AG04449 (cell line): ENCODE measurements at regions of chr11 and their contacts with region 1.

Region 1: DNA sequence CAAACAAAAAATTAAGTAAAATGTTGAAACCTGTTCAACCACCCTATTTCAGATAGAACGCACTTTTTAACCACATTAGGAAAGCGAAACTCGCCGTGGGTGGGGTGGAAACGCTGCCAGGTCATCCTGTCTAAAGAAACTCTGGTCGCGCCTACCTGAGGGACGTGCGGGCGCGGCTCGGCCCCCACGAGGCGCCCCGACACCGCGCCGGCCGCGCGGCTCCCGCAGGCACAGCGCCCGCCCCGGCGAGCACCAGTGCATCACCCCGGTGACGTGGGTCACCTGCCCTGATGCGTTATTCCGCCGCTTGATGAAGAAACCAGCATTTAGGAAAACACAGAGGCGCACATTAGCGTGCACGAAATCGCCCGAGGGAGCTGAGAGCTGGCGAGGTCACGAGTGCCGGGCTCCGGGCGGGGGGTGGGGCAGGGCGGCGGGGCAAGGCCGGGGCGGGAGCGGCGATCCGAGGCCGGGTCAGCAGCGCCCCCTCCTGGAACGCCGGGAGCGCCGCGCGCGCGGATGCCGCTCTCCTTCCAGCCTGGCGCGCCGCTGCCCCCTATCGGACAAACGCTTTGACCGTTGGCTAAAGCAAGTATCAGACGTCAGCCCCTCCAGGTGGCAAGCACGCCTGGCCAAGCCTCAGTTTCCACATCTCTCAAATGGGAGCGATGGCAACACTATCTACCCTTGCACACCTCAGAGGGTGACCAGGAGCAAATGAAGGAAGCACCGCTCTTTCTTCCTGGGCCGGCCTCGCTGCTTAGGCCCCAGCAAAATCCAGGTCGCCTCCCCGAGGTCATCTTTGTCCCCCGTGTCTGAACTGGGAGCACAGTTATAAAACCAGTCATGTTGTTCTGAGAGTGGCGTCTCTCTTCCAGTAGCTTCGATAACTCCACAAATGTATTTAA is 15.7 kb upstream of the SNX32 start:
- DNase-seq: peak; percentile 5
- H3K4me3 ChIP-seq: peak overlapping the region; percentile 79
- CTCF ChIP-seq: peak; percentile 96

Region 2: GRCh38 chr11:65646921-65647751 is 171.0 kb before region 1 on chr11:
- CTCF ChIA-PET with region 1: no interaction called
- POLR2A ChIA-PET with region 1: no interaction called
- DNase-seq: no peak
- H3K4me3 ChIP-seq: peak overlapping the region; percentile 27
- CTCF ChIP-seq: no peak

Region 3: DNA sequence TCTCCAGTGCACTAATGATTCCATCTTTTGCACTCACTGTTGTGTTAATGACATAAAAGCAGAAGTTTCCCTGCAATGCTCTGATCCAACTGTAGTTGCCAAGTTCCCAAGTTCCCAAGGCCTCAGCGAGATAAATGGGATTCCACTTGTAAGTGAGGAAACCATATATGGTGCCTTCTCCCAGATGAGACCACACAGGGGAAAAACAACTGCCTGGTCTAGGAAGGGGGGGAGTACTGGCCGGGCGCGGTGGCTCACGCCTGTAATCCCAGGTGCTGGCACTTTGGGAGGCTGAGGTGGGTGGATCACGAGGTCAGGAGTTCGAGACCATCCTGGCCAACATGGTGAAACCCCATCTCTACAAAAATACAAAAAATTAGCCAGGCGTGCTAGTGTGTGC is 132.1 kb before region 1 on chr11:
- CTCF ChIA-PET with region 1: no interaction called
- POLR2A ChIA-PET with region 1: no interaction called
- DNase-seq: no peak
- H3K4me3 ChIP-seq: no peak overlapping the region
- CTCF ChIP-seq: no peak

Region 4: DNA sequence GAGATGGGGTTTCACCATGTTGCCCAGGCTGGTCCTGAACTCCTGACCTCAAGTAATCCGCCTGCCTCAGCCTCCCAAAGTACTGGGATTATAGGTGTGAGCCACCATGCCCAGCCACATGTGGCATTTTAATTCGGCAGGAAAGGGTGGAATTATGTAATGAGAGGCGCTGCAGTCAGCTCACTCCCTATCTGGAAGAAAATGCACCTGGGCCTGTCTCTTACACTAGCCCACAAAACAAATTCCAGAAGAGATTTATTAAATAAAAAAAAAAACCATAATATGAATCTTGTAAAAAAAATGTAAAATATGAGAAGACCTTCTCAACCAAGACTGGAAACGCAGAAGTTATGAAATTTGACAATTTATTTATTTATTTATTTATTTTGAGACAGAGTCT is 114.2 kb before region 1 on chr11:
- CTCF ChIA-PET with region 1: interaction called, 170 read pairs
- POLR2A ChIA-PET with region 1: no interaction called
- DNase-seq: no peak
- H3K4me3 ChIP-seq: no peak overlapping the region
- CTCF ChIP-seq: no peak

Region 5: DNA sequence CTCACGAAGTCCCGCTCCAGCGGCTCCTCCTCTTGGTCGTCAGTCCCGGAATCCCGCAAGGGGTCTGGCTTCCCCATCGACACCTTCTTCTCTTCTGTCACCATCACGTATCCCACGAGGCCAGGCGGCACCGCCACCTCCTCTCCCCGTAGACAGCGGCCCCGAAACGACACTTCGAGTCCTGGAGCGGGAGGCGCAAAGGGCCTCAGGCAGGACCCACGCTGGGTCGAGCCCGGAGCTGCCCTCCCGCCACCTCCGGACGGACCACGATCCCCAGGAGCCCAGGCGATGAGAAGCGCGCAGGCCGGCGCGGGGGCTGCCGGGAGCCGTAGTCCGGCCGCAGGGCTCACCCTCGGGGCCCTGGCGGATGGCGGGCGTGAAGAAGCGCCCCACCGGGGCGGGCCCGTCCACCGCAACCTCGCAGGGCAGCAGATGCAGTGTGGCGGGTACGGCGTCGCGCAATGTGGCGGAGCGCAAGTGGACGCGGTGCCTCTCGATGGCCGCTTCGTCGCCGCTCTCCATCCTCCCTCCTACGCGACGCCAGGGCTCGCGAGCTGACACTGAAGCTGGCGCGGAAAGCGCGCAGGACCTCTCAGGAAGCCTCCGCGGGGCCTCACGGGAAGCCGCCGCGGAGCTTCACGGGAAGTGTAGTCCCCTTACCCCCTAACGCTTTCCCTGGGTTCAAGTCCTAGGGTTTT is 97.7 kb before region 1 on chr11 and contains the start of gene RNASEH2C:
- CTCF ChIA-PET with region 1: interaction called, 170 read pairs
- POLR2A ChIA-PET with region 1: no interaction called
- DNase-seq: no peak
- H3K4me3 ChIP-seq: peak within 1 kb of the TSS; percentile 89
- CTCF ChIP-seq: no peak

Region 6: GRCh38 chr11:65743928-65744698 is 74.0 kb before region 1 on chr11:
- CTCF ChIA-PET with region 1: interaction called, 20 read pairs
- POLR2A ChIA-PET with region 1: no interaction called
- DNase-seq: no peak
- H3K4me3 ChIP-seq: no peak overlapping the region
- CTCF ChIP-seq: peak; percentile 27

Region 7: DNA sequence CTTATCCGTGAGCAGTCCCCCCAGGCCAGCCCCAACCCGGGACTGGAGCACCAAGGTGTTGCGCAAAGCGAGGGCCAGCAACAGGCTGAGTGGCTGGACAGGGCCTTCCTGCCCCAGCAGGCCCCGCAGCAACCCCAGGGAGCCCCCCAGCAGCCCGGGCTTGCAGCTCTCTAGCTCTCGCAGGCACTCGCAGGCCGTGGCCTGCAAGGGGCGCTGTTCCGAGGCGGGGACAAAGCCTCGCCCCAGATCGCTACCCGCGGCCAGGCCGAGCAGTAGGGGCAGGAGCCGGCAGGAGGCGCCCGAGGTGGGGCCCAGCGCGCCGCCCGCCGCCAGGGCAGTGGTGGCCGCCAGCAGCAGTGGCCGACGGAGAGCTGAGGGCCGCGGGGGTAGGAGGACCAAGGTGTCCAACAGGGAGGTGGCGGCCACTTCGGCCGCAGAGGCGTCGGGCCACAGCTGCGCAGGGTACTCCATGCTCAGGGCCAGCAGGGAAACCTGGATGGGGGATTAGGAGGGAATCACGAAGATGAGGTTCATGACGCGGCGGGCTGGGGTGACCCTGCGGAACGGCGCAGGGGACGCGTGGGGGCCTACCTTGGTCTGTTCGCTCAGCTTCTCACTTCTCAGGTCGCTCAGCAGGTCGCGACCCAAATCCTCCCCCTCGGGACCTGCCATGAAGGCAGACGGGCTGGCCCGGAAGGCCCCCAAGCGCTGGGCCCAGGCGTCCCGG is 38.1 kb before region 1 on chr11:
- CTCF ChIA-PET with region 1: interaction called, 20 read pairs
- POLR2A ChIA-PET with region 1: no interaction called
- DNase-seq: no peak
- H3K4me3 ChIP-seq: peak overlapping the region; percentile 80
- CTCF ChIP-seq: peak; percentile 82

Region 8: DNA sequence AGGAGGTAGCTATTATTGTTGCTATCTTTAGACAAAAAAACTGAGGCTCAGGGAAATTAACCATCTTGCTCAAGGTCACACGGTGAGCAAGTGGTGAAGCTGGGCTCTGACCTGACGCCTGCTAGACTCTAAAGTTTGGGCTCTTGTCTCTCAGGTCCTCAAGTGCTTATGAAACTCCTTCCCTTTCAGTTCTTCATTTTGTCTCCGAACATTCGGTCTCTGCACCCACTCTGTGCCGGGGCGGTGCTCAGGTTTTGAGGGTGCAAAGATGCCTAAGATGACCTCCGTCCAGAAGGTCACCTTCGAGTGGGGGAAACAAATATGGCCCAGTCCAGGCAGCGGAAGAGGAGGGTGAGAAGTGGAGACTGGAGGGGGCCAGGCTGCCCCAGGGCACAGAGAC is 15.2 kb before region 1 on chr11:
- CTCF ChIA-PET with region 1: interaction called, 47 read pairs
- POLR2A ChIA-PET with region 1: no interaction called
- DNase-seq: no peak
- H3K4me3 ChIP-seq: no peak overlapping the region
- CTCF ChIP-seq: no peak